ENCODE measurements at regions of chr9 and their contacts with region 1.

Region 1: DNA sequence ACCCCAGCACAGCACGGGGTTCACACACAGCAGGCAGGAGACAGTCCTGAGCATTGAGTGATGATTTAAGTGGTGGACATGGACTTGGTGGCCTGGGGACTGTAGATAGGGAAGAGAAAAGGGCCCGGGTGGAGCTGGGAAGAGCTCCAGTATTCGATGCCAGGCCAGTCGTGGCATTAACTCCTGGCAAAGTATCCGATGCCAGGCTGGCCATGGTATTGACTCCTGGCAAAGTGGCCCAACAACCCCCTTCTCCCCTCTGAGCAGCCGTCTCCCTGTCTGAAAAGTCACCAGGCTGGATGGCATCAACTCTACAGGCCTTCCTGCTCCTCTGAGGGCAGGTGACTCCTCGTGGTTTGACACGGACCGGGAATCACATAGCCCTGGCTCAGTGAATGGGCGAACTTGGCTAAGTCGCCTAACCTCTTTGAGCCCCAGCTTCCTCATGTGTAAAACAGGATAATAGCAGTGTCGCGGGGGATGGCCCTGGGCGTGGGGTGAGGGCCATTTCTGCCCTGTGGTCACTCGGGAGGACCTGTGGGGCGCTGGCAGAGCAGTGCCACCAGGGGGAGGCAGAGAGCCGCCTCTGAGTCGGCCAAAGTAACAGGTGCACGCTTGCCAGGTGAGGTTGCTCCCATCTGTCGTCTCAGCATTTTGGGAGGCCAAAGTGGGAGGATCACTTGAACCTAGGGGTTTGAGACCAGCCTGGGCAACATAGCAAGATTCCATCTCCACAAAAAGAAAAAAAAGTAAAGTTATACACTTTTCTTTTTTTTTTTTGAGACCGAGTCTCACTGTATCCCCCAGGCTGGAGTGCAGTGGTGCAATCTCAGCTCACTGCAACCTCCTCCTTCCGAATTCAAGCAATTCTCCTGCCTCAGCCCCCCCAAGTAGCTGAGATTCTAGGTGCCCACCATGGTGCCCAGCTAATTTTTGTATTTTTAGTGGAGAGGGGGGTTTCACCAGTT is 5.7 kb upstream of the SEC16A start:
- DNase-seq: peak; percentile 59 to 83 (median 77)
- H3K4me3 ChIP-seq: no peak overlapping the region
- H3K27ac ChIP-seq: no peak overlapping the region
- H3K4me1 ChIP-seq: peaks cover 6% of the 10 kb centered on the region
- H3K27me3 ChIP-seq: no peaks in the 10 kb centered on the region
- CTCF ChIP-seq: peak; percentile 95 to 98 (median 95)
- EP300 ChIP-seq: no peak
- POLR2A ChIP-seq: no peak

Region 2: GRCh38 chr9:136625101-136626060 is 136.8 kb after region 1 on chr9:
- intact Hi-C with region 1: loop called in 3 of 4 experiments (anchors 2 kb)
- DNase-seq: peak; percentile 66 to 89 (median 72)
- H3K4me3 ChIP-seq: no peak overlapping the region
- H3K27ac ChIP-seq: no peak overlapping the region
- H3K4me1 ChIP-seq: peaks cover 4% of the 10 kb centered on the region
- H3K27me3 ChIP-seq: no peaks in the 10 kb centered on the region
- CTCF ChIP-seq: peak in 2 of 3 donors; percentile 20 to 30
- EP300 ChIP-seq: no peak
- POLR2A ChIP-seq: no peak

Region 3: DNA sequence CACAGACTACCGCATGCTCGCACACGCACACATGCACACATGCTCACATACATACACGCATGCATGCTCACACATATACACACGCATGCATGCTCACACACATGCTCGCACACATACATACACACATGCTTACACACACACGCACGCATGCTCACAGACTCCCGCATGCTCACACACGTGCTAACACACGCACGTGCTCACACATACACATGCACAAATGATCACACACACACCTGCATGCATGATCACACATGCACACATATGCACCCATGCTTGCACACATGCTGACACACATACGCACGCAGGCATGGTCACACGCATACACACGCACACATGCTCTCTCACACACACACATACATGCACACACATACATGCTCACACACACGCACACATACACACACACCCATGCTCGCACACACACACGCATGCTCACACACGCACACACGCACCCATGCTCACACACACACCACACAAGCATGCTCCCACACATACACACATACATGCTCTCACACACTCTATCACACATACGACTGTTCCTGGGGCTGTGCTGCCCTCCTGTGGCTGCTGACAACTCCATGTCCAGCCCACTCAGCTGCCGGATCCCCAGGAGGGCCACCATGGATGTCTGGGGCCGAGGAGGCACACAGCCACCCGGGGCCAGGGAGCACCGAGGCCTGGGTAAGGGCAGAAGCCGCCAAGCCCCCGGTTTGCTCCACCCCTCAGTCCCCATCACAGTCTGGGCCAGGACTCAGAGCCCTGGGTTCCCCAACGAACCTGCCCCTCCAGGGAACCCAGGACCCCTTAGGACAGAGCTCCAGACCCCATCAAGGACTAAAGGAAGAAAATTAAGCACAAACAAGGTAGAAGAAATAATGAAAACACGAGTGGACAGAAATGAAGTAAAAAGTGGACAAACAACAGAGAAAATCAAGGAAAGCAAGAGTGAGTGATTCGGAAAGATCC is 142.8 kb after region 1 on chr9:
- intact Hi-C with region 1: loop called in 3 of 4 experiments (anchors 1 to 2 kb)
- DNase-seq: peak; percentile 68 to 86 (median 79)
- H3K4me3 ChIP-seq: no peak overlapping the region
- H3K27ac ChIP-seq: no peak overlapping the region
- H3K4me1 ChIP-seq: peaks cover 1% of the 10 kb centered on the region
- H3K27me3 ChIP-seq: no peaks in the 10 kb centered on the region
- CTCF ChIP-seq: peak; percentile 32 to 78 (median 69)
- EP300 ChIP-seq: no peak
- POLR2A ChIP-seq: no peak